ENCODE measurements at regions of chrX and their contacts with region 1.

Region 1: GRCh38 chrX:1657367-1658070 is 42.7 kb downstream of the ASMT start:
- DNase-seq: peak; percentile 86
- H3K4me3 Mint-ChIP-seq: peak overlapping the region; percentile 93
- H3K27ac Mint-ChIP-seq: peak overlapping the region; percentile 95
- H3K4me1 Mint-ChIP-seq: peaks cover 28% of the 10 kb centered on the region
- H3K27me3 Mint-ChIP-seq: no peaks in the 10 kb centered on the region

Region 2: DNA sequence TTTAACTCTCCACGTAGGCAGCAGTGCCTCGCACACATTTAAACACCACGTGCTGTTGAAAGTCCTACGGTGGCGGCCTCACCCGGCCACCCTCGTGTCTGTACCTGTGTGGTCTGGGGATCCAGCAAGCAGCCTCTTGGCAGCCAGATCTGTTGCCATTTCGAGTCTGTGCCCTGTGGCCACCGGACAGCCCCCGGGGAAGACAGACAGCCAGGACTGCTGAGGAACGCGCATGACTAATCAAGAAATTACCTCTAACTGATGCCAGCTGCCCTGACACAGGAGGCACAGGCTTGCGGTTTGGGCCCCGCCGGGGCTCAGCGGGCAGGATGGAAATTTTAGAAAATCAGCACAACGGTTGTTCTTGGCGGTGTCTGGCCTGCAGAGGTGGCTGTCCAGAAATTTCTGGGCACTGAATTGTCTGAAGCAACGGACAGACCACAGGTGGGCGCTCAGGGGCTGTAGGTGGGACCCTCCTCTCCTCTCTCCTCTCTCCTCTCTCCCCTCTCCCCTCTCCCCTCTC is 189.2 kb before region 1 on chrX:
- intact Hi-C with region 1: loop called (anchors 5 kb)
- DNase-seq: peak; percentile 90
- H3K4me3 Mint-ChIP-seq: peak overlapping the region; percentile 83
- H3K27ac Mint-ChIP-seq: peak overlapping the region; percentile 92
- H3K4me1 Mint-ChIP-seq: peaks cover 70% of the 10 kb centered on the region
- H3K27me3 Mint-ChIP-seq: no peaks in the 10 kb centered on the region

Region 3: GRCh38 chrX:1679238-1679637 is 21.7 kb after region 1 on chrX:
- intact Hi-C with region 1: loop called (anchors 2 kb)
- DNase-seq: peak; percentile 65
- H3K4me3 Mint-ChIP-seq: no peak overlapping the region
- H3K27ac Mint-ChIP-seq: peak overlapping the region; percentile 10
- H3K4me1 Mint-ChIP-seq: peaks cover 19% of the 10 kb centered on the region
- H3K27me3 Mint-ChIP-seq: no peaks in the 10 kb centered on the region

Region 4: DNA sequence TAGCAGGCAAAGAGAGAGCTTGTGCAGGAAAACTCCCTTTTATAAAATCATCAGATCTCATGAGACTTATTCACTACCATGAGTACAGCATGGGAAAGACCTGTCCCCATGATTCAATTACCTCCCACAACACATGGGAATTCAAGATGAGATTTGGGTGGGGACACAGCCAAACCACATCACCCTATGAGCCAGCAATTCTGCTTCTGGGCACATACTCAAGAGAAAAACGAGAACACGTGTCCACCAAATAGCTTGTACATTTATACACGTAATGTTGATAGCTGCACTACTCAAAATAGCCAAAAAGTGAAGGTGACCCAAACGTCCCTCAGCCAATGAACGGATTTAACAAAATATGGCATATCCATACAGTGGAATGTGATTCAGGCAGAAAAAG is 937.7 kb after region 1 on chrX:
- intact Hi-C with region 1: loop called (anchors 1 kb)
- DNase-seq: no peak
- H3K4me3 Mint-ChIP-seq: no peak overlapping the region
- H3K27ac Mint-ChIP-seq: no peak overlapping the region
- H3K4me1 Mint-ChIP-seq: peaks cover 10% of the 10 kb centered on the region
- H3K27me3 Mint-ChIP-seq: no peaks in the 10 kb centered on the region

Region 5: GRCh38 chrX:2696698-2697215 is 1039.2 kb after region 1 on chrX:
- intact Hi-C with region 1: loop called (anchors 1 kb)
- DNase-seq: peak; percentile 89
- H3K4me3 Mint-ChIP-seq: peak overlapping the region; percentile 95
- H3K27ac Mint-ChIP-seq: peak overlapping the region; percentile 98
- H3K4me1 Mint-ChIP-seq: peaks cover 84% of the 10 kb centered on the region
- H3K27me3 Mint-ChIP-seq: no peaks in the 10 kb centered on the region